ENCODE measurements at regions of chr16 and their contacts with region 1.

Region 1: GRCh38 chr16:30922960-30923535 is 324 bp upstream of the FBXL19 start:
- DNase-seq: peak; percentile 99 to 100
- ATAC-seq: peak; percentile 80 to 89 (median 86)
- H3K4me3 ChIP-seq: peak overlapping the region; percentile 57 to 89 (median 73)
- H3K27ac ChIP-seq: peak overlapping the region; percentile 86 to 97 (median 94)
- H3K4me1 ChIP-seq: peaks cover 0 to 24% (median 16%) of the 10 kb centered on the region in 9 donors
- H3K27me3 ChIP-seq: no peaks in the 10 kb centered on the region
- CTCF ChIP-seq: no peak

Region 2: DNA sequence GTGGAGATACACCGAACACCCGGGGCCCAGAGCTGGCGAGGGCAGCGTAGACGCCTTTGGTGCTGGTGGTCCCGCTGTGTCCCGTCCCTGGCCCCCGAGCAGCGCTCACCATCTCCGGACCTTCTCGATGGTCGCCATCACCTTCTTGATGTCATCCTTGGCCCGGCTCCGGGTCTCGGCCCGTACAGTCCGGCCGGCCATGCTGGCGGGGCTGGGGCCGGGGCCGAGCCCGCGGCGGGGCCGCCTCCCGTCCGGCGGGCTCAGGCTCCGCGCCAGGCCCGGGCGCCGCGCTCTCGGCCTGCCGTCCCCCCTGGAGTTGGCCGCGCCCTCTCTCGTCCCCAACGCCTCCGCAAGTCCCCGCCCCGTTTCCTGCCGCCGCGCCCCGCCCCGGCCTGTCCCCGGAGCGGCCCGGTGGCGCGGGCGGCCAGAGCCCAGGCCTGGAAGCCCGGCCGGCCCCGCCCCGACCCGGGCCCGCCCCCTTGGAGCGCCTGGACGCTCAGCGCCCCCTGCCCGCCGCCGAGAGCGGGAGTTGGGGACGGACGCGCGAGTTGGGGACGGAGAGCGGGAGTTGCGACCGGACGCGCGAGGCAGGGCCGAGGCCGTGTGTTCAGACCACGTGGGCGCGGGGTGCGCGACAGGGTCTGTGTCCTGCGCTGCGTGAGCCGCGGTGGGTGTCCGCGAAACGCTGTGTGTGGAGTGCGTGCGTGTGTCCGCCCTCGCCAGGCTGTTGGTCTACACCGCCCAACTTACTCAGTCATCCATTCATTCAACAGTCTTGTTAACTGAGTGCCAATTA is 29.1 kb before region 1 on chr16 and contains the start of gene BCL7C:
- intact Hi-C with region 1: loop called in 2 of 10 experiments (anchors 1 to 2 kb)
- DNase-seq: peak; percentile 94 to 96
- ATAC-seq: peak; percentile 70 to 89 (median 86)
- H3K4me3 ChIP-seq: peak within 1 kb of the TSS; percentile 73 to 100 (median 94)
- H3K27ac ChIP-seq: peak within 1 kb of the TSS; percentile 92 to 100 (median 97)
- H3K4me1 ChIP-seq: peaks cover 13 to 48% (median 36%) of the 10 kb centered on the region in 9 donors
- H3K27me3 ChIP-seq: no peaks in the 10 kb centered on the region
- CTCF ChIP-seq: peak in 8 of 9 donors; percentile 37 to 81 (median 58)
- total RNA-seq, gene BCL7C: 24.2 to 31.3 (median 27.0) TPM

Measured in heart right ventricle (tissue), 16 donors.